Ovary (tissue), 10 donors: ENCODE measurements at regions of chr4 and their contacts with region 1.

Region 1: DNA sequence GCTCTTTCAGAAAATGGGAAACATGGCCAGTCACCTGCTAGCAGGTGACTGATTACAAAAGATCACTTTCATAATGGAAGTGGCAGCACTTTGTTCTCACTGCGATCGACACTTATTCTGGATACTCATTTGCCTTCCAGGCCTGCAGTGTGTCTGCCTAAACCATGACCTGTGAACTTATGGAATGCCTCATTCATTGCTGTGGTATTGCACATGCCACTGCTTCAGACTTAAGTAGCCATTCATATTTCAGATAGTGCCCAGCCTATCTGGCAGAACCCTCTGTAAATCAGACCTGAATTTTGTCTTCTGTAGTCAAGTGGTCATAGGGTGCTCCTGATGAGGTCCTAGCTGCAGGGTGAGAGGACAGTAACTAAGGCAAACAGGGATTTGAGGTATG is 23.3 kb upstream of the MGST2 start:
- DNase-seq: no peak
- H3K4me3 ChIP-seq: no peak overlapping the region
- H3K27ac ChIP-seq: no peak overlapping the region
- H3K4me1 ChIP-seq: no peaks in the 10 kb centered on the region
- H3K27me3 ChIP-seq: no peaks in the 10 kb centered on the region
- CTCF ChIP-seq: no peak
- EP300 ChIP-seq: no peak
- POLR2A ChIP-seq: no peak

Region 2: DNA sequence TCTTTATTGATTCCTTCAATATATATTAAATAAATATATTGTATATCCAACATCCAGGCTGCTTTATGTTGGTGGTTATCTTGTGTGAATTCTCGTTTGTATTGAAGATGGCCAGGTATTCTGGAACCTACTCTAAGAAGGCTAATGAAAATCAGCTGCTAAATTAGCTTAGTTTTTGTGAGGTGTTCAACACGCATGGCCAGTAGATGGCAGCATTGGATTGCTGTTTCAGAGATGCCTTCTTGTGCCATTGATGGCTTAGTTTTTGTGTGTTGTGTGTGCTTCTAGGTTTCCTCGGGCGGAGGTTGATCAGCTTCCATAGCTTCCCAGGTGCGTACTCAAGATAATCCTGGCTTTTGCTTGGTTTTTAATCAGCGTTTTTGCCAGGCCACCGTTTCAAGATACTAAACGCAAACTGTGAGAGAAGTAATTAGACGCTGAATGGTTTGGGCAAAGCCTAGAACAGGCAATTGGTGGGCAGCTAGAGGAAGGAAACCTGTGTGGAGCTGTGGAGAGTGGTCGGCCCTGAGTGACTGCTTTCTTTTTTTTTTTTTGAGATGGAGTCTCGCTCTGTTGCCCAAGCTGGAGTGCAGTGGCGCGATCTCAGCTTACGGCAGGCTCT is 611.6 kb before region 1 on chr4:
- intact Hi-C with region 1: loop called in 1 of 4 experiments (anchors 10 kb)
- DNase-seq: peak; percentile 64 to 81 (median 68)
- H3K4me3 ChIP-seq: no peak overlapping the region
- H3K27ac ChIP-seq: no peak overlapping the region
- H3K4me1 ChIP-seq: no peaks in the 10 kb centered on the region
- H3K27me3 ChIP-seq: no peaks in the 10 kb centered on the region
- CTCF ChIP-seq: peak; percentile 56 to 78 (median 77)
- EP300 ChIP-seq: no peak
- POLR2A ChIP-seq: no peak

Region 3: DNA sequence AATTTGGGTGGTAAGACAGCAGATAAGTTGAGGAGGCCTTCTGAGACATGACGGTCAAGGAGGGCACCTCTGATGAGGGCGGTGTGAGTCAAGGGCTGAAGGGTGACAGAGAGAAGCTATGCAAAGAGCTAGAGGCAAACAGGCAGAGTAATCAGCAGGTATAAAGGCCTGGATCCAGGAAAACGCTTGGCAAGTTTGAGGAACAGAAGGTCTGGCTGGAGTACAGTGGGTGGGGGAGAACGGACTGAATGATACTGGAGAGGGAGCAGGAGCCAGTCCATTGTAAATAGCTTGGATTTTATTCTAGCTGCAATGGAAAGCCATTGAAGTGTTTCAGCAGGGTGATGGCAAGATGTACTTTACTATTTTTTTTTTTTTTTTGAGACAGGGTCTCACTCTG is 149.2 kb before region 1 on chr4:
- intact Hi-C with region 1: loop called in 3 of 4 experiments (anchors 10 kb)
- DNase-seq: no peak
- H3K4me3 ChIP-seq: no peak overlapping the region
- H3K27ac ChIP-seq: no peak overlapping the region
- H3K4me1 ChIP-seq: peaks cover 3% of the 10 kb centered on the region
- H3K27me3 ChIP-seq: no peaks in the 10 kb centered on the region
- CTCF ChIP-seq: no peak
- EP300 ChIP-seq: no peak
- POLR2A ChIP-seq: no peak

Region 4: DNA sequence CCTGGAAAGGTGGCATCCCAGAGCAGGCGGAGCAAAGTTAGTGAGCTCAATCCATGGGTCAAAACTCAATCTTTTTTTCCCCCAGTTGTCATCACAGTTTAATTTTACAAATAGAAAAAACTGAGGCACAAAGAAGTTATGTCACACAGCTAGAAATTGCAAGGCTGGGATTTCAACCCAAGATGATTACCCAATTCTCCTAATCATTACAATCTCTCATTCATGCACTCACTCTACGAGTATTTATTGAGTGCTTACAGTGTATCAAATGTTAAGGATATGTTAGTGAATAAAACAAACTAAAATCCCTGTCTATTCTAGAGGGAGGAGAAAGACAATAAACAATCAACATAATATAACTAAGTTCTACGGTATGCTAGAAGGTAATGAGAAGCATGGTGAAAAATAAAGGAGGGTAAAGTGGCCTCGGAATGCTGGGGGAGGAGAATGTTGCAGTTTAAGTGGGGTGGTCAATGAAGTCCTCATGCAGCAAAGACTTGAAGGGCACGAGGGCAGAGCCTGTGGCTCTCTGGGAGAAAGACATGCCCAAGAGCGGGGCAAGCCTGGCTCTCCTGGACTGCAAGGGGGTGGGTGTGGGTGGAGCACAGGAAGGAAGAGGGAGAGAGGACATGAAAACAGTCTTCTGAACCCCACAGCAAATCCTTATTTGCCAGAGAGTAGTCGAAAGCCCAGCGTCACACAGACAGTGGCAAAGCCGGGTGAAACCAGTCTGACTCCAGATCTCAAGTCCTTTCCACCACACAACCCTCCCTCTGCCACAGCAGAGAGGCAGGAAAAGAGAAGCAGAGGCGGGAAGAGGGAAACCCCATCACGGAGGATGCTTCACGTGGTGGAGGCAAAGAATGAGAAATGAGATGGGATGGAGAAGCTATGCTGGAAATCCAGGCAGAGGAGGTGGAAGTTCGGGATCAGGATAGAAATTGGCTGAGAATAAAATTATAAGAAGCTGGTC is 140.2 kb before region 1 on chr4:
- intact Hi-C with region 1: loop called (anchors 5 to 10 kb)
- DNase-seq: no peak
- H3K4me3 ChIP-seq: no peak overlapping the region
- H3K27ac ChIP-seq: no peak overlapping the region
- H3K4me1 ChIP-seq: peaks cover 3% of the 10 kb centered on the region
- H3K27me3 ChIP-seq: no peaks in the 10 kb centered on the region
- CTCF ChIP-seq: no peak
- EP300 ChIP-seq: no peak
- POLR2A ChIP-seq: no peak

Region 5: DNA sequence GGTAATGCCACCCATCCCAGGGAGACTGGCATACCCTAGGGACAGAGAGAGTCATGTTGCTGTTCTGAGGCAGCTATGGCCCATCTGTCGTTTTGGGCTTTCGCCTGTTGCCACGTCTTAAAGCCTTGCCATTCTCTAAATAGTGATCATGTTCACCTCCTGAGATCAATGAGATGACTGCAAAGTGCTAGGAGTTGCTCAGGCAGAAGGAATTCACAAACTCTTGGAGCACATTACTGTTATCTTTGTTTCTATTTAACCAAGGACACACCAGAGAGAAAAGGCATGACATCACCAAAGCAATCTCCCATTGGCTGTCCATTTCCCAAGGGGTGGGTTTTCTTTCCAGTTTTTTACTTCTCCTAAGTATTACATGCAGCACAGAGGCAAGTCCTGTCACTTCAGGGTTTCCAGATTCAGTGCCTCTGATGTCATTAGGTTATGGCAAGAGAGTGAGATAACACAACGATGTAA is 49.2 kb before region 1 on chr4:
- intact Hi-C with region 1: loop called in 1 of 4 experiments (anchors 10 kb)
- DNase-seq: peak in 3 of 5 donors; percentile 25 to 59 (median 28)
- H3K4me3 ChIP-seq: no peak overlapping the region
- H3K27ac ChIP-seq: no peak overlapping the region
- H3K4me1 ChIP-seq: peaks cover 6% of the 10 kb centered on the region
- H3K27me3 ChIP-seq: no peaks in the 10 kb centered on the region
- CTCF ChIP-seq: no peak
- EP300 ChIP-seq: no peak
- POLR2A ChIP-seq: no peak

Region 6: DNA sequence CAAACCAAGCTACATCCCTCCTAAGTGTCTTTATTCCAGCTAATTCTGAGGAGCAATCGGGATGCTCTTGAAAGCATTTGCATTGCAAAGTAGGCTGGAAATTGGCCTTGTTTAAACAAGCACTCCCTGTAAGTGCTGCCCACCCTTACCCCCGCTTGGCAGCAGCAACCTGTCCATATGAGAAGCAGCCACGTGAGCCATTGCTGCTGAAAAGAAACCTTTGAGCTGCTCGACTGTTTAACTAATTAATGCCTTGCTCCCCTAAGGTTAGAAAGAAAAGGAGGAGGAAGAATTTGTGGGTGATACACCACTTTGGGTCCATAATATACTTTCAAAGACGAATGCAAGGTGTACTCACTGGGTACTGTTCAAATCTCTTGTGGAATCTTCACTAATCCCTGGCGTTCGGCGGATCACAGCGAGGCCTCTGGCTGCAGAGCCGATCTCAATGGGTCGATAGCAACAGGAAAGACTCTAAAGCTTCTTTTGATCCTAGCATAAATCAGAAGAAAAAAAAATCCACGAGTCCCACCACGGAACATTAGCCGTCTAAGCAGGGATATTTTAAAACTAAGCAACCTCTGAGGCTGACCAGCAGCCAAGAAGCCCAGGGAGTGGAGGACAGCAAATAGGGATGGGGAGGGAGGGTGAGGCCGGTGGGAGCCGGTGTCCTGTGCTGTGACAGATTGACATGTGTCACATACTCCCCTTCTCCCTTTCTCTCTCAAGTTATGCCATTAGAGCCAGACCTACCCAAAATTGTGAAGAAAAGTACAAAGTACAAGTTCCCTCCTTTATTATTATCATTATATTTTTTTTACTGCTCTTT is 14.0 kb before region 1 on chr4:
- intact Hi-C with region 1: no loop called
- DNase-seq: no peak
- H3K4me3 ChIP-seq: no peak overlapping the region
- H3K27ac ChIP-seq: no peak overlapping the region
- H3K4me1 ChIP-seq: no peaks in the 10 kb centered on the region
- H3K27me3 ChIP-seq: no peaks in the 10 kb centered on the region
- CTCF ChIP-seq: no peak
- EP300 ChIP-seq: no peak
- POLR2A ChIP-seq: no peak

Region 7: DNA sequence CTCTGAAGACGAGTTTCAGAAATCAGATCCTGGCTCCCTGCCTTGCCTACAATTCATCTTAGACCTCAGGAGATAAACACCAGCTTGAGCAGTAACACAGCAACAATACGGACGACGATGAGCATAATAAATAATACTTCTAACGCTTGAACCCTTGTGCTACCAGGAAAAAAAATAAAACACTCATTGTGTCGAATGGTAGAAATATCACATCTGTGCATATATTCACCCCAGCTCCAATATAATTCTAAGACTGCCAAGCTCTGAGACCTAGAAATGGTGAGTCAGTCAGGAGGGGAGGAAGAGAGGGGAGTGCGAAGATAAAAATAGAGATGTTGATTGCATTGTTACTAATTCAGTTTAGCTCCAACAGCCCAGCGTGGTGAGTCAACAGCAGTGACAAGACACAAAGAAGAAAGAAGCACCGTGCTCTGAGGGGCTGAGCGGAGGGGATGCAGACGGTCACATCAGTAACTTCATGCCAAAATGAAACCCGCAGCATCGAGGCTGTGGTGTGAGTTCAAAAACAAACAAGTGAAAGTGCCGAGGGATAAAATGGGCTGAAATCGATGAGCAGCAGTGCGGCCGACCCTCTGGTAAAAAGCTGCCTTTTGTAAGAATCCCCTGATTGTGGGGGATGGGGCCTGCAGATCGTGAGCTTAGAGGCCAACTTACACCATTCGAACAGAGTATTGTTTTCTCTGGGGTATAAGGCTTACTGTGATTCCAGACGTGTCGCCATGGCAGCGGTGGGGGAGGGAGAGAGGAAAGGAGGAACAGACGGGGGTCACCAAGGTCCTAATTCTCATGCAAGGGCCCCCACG is 173.6 kb after region 1 on chr4:
- intact Hi-C with region 1: no loop called
- DNase-seq: peak; percentile 64 to 80 (median 72)
- H3K4me3 ChIP-seq: peak overlapping the region; percentile 27
- H3K27ac ChIP-seq: peak overlapping the region; percentile 48 to 83
- H3K4me1 ChIP-seq: peaks cover 12% of the 10 kb centered on the region
- H3K27me3 ChIP-seq: no peaks in the 10 kb centered on the region
- CTCF ChIP-seq: no peak
- EP300 ChIP-seq: no peak
- POLR2A ChIP-seq: peak; percentile 35

Region 8: GRCh38 chr4:139866276-139866962 is 224.1 kb after region 1 on chr4:
- intact Hi-C with region 1: no loop called
- DNase-seq: peak in 2 of 5 donors; percentile 31 to 41
- H3K4me3 ChIP-seq: no peak overlapping the region
- H3K27ac ChIP-seq: peak overlapping the region in 1 of 2 donors; percentile 25
- H3K4me1 ChIP-seq: peaks cover 18% of the 10 kb centered on the region
- H3K27me3 ChIP-seq: no peaks in the 10 kb centered on the region
- CTCF ChIP-seq: no peak
- EP300 ChIP-seq: no peak
- POLR2A ChIP-seq: no peak

Region 9: DNA sequence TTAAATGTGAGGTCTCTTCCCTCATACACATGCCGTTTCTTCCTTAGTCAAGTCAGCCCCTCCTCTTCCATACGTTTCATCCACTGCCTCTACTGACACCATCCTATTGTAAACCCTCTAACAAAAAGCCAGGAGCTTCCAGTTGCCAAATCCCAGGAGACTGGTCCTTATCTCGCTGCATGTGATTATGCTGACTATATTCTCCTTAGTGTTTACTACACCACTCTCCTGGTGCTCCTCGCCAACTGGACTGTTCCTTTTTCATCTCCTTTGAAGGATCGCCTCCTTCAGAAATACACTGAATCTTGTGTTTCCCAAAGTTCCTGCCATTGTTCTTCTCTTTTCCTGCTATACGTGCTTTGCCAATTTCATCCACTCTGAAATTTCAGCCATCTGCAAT is 483.9 kb after region 1 on chr4:
- intact Hi-C with region 1: no loop called
- DNase-seq: no peak
- H3K4me3 ChIP-seq: no peak overlapping the region
- H3K27ac ChIP-seq: no peak overlapping the region
- H3K4me1 ChIP-seq: peaks cover 3% of the 10 kb centered on the region
- H3K27me3 ChIP-seq: no peaks in the 10 kb centered on the region
- CTCF ChIP-seq: no peak
- EP300 ChIP-seq: no peak
- POLR2A ChIP-seq: no peak